ENCODE measurements at regions of chr9 and their contacts with region 1.

Region 1: DNA sequence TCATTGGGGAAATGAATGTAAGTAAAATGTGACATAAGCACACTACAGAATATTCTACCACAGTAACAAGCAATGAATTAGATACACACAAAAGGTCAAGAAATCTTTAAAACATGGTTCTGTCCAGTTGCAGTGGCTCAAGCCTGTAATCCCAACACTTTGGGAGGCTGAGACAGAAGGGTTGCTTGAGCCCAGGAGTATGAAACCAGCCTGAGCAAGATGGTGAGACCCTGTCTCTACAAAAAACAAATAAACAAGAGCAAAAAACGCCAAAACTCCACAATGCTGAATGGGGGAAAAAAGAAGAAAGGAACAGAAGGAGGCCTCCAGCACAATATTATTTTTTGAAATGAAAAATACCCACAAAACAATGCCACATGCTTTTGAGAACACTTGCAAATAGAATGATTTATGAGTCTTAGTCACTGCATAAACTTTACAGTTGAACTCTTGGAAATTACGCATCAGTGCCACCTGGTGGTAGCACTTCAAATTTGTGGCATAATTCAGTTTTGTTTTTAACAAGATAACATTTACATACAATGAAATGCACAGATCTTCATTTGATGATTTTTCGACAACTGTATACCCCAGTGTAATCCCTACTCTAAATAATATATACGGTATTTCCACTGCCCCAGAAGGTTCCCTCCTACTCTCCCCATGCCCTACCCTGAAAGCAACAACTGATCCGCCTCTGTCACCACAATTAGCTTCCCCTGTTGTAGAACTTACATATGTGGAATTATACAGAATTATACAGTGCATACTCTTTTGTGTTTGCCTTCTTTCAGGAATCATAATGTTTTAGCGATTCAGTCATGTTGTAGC is 14.4 kb upstream of the SPINK4 start:
- DNase-seq: peak; percentile 80
- H3K4me3 Mint-ChIP-seq: no peak overlapping the region
- H3K27ac Mint-ChIP-seq: peak overlapping the region; percentile 20
- H3K4me1 Mint-ChIP-seq: peaks cover 10% of the 10 kb centered on the region
- H3K27me3 Mint-ChIP-seq: no peaks in the 10 kb centered on the region

Region 2: DNA sequence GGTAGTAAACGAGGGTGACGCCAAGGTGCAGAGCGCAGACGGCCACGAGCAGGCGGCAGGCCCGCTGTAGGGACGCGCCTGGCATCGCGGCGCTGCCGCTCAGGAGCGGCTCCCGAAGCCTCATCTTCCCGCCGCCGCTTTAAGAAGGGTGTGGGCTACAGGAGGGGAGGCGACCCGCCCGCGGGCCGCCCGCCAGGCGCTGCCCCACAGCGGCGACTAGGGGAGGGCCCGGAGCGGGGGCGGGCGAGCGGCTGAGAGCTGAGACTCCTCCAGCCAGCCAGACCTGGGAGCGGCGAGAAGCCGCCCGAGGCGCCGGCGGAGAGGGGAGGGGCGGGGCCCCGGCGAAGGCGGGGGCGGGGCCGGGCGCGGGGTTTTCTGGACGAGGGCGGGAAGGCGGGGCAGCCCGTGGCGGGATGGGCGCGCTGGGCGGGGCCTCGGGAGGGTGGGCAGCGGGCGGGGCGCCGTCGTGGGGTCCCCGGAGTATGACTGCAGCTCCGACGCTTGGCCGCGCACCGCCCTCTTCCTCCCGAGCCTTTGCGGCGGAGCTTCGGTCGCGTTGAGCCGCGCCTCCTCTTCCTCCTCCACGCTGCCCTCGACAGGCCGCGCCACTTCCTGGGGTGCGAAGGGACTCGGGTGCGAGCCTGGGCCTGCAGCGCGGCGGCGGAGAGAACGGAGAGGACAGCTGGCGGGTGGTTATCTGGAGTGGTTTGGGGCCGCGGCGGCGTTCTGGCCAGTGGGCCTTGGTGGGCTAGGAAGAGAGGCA is 58.3 kb before region 1 on chr9 and contains the start of gene B4GALT1:
- CTCF ChIA-PET with region 1: interaction called, 15 read pairs
- POLR2A ChIA-PET with region 1: no interaction called
- intact Hi-C with region 1: loop called (anchors 1 kb)
- DNase-seq: peak; percentile 98
- H3K4me3 Mint-ChIP-seq: peak within 1 kb of the TSS; percentile 95
- H3K27ac Mint-ChIP-seq: peak within 1 kb of the TSS; percentile 97
- H3K4me1 Mint-ChIP-seq: peaks cover 48% of the 10 kb centered on the region
- H3K27me3 Mint-ChIP-seq: no peaks in the 10 kb centered on the region
- total RNA-seq, gene B4GALT1: 76.6 to 78.0 TPM

Region 3: DNA sequence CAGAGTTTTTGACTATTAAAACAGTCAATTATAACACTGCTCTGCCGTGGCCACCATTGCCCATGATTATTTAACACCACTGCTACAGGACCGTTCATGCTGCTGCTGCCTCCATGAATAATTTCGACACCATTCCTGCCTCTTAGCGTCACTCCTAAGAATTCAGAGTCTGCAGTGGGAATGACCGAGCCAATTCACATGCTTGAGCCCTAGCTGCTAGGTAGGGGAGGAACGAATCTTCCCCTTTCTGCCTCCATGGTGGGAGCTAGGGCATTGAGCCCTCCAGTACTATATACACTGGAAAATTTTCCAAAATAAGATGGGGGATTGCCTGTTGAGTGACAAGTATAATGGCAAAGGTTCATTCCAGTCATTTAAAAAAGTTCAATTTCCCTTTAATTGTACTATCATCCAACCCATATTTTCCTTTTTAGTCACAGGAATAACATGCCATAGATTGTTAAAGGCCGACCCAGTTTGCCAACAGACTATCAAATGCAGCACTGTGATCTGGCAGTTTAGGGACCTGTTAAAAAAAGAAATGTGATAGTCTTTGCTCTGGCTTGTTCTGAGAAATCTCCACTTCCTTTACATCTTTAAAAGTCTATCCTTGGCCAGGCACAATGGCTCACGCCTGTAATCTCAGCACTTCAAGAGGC is 44.9 kb before region 1 on chr9:
- CTCF ChIA-PET with region 1: interaction called, 12 read pairs
- POLR2A ChIA-PET with region 1: no interaction called
- intact Hi-C with region 1: no loop called
- DNase-seq: no peak
- H3K4me3 Mint-ChIP-seq: no peak overlapping the region
- H3K27ac Mint-ChIP-seq: no peak overlapping the region
- H3K4me1 Mint-ChIP-seq: no peaks in the 10 kb centered on the region
- H3K27me3 Mint-ChIP-seq: peaks cover 8% of the 10 kb centered on the region

Measured in activated CD4-positive, alpha-beta memory T cell treated with anti-CD3 and anti-CD28 coated beads for 36 hours (primary cell).